Right ventricle myocardium superior (tissue), 1 donor: ENCODE measurements at regions of chr3 and their contacts with region 1.

Region 1: GRCh38 chr3:98213276-98213675 is 46.8 kb downstream of the OR5H15 start:
- DNase-seq: no peak
- ATAC-seq: no peak

Region 2: DNA sequence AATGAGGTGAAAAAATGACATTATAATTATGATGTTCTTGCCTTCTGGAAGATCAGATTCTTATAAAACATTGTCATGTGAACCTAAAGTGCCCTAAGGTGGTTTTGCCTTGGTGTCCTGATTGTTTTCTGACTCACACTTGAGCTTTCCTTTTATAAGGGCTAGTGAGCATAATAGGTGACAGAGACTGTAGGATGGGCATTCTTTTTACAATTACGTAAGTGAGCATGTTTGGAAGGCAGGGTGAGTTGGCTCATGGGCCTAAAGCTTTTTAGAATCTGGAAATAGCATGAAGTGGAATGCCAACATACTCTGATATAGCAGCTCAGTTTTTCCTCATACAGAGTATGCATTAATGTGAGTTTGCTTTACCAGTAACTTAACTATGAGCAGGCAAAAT is 350.2 kb before region 1 on chr3:
- intact Hi-C with region 1: no loop called
- DNase-seq: no peak
- ATAC-seq: peak; percentile 80

Region 3: DNA sequence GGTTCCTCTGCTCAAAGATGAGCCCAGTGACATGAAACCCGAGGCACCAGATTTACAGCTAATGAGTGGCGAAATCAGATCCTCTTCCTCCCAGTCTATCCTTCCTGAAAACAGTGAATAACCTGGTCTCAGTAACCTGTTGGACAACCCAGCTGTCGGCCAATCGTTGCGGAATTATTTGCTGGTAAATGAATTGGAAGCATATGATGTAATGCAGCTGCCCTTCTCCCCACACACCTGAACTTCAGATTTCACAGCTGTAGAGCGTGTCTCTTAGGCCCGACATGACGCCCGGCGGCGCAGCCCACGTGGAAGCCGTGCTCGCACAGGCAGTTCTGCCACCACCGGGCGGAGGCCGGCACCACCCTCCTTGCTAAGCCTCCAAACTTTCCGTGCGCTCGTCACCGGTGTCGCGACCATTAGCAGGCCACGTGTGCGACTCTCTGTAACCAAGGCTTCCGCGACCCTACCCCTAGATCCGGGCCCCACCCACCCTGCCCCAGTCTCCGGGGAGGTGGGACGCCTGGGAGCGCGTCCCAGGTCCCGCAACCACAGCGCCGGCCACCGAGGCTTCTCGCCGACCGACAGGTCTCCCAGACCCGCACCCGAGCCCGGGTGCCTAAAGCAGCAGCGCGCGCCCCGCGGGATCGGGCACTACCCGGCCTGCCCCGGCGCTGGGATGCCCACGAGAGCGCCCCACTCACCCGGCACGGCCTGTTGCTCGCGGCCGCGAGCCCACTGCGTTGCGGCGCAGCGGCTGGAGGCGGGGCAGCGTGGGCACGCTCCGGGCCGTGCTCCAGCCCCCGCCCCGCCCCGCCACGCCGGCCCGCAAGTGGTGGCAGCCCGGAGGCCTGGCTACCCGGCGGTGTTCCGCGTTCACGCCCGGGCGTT is 241.4 kb before region 1 on chr3 and contains the start of gene RIOX2:
- intact Hi-C with region 1: no loop called
- DNase-seq: peak; percentile 87
- ATAC-seq: peak; percentile 99
- total RNA-seq, gene RIOX2: 9.5 TPM

Region 4: GRCh38 chr3:98154686-98155085 is 58.6 kb before region 1 on chr3:
- intact Hi-C with region 1: loop called (anchors 2 kb)
- DNase-seq: no peak
- ATAC-seq: no peak

Region 5: DNA sequence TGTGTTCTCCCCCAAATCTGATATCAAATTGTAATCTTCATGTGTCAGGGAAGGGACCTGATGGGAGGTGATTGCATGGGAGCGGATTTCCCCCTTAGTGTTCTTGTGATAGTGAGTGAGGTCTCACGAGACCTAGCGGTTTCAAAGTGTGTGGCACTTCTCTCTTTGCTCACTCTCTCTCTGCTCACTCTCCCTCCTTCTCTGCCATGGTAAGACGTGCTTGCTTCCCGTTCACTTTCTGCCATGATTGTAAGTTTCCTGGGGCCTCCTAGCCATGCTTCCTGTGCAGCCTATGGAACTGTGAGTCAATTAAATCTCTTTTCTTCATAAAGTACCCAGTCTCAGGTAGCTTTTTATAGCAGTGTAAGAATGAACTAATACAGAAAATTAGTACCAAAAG is 20.2 kb after region 1 on chr3:
- intact Hi-C with region 1: no loop called
- DNase-seq: no peak
- ATAC-seq: no peak

Region 6: DNA sequence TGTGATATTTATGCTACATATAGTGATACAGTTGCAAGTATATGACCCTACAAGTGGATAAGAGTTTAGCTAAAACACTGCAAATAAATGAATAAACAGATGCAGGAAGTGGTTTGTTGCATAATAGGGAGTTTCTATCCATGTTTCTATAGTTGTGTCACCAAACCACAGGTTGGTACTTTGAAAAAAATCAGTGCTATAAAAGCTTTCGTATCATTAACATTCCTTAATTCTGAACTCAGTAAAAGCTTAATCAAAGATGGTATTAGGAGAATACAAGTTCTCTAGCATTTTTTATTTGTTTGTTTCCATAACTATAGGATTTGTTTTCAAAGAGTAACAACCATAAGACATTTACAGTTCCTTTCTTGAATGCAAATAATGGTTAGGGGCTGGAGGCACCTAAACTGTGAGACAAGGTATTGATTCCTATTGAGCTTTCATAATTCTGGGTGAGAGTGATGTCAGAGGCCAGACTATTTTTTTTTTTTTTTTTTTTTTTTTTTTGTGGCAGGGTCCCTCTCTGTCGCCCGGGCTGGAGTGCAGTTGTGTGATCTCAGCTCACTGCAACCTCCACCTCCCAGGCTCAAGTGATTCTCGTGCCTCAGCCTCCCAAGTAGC is 350.5 kb after region 1 on chr3:
- intact Hi-C with region 1: no loop called
- DNase-seq: no peak
- ATAC-seq: no peak